ENCODE measurements at regions of chr2 and their contacts with region 1.

Region 1: GRCh38 chr2:137947728-137948336 is 16.4 kb upstream of the HNMT start:
- DNase-seq: peak; percentile 66 to 78 (median 78)
- H3K4me3 ChIP-seq: no peak overlapping the region
- H3K4me3 Mint-ChIP-seq: no peak overlapping the region
- H3K27ac ChIP-seq: no peak overlapping the region
- H3K27ac Mint-ChIP-seq: peak overlapping the region in 1 of 7 donors; percentile 52
- H3K4me1 ChIP-seq: peaks cover 8 to 11% of the 10 kb centered on the region in 2 donors
- H3K4me1 Mint-ChIP-seq: peaks cover 19% of the 10 kb centered on the region
- H3K27me3 ChIP-seq: no peaks in the 10 kb centered on the region
- H3K27me3 Mint-ChIP-seq: peaks cover 0 to 3% (median 3%) of the 10 kb centered on the region in 3 donors
- CTCF ChIP-seq: peak; percentile 76

Region 2: GRCh38 chr2:137857566-137858280 is 90.1 kb before region 1 on chr2:
- intact Hi-C with region 1: no loop called
- DNase-seq: no peak
- H3K4me3 ChIP-seq: no peak overlapping the region
- H3K4me3 Mint-ChIP-seq: no peak overlapping the region
- H3K27ac ChIP-seq: no peak overlapping the region
- H3K27ac Mint-ChIP-seq: no peak overlapping the region
- H3K4me1 ChIP-seq: no peaks in the 10 kb centered on the region
- H3K4me1 Mint-ChIP-seq: no peaks in the 10 kb centered on the region
- H3K27me3 ChIP-seq: no peaks in the 10 kb centered on the region
- H3K27me3 Mint-ChIP-seq: peaks cover 1 to 5% (median 2%) of the 10 kb centered on the region in 3 donors
- CTCF ChIP-seq: no peak

Region 3: GRCh38 chr2:137912371-137912770 is 35.5 kb before region 1 on chr2:
- intact Hi-C with region 1: no loop called
- DNase-seq: no peak
- H3K4me3 ChIP-seq: no peak overlapping the region
- H3K4me3 Mint-ChIP-seq: no peak overlapping the region
- H3K27ac ChIP-seq: no peak overlapping the region
- H3K27ac Mint-ChIP-seq: no peak overlapping the region
- H3K4me1 ChIP-seq: no peaks in the 10 kb centered on the region
- H3K4me1 Mint-ChIP-seq: no peaks in the 10 kb centered on the region
- H3K27me3 ChIP-seq: no peaks in the 10 kb centered on the region
- H3K27me3 Mint-ChIP-seq: no peaks in the 10 kb centered on the region
- CTCF ChIP-seq: no peak

Region 4: GRCh38 chr2:138030459-138030858 is 82.6 kb after region 1 on chr2:
- intact Hi-C with region 1: loop called in 1 of 2 experiments (anchors 10 kb)
- DNase-seq: no peak
- H3K4me3 ChIP-seq: no peak overlapping the region
- H3K4me3 Mint-ChIP-seq: no peak overlapping the region
- H3K27ac ChIP-seq: no peak overlapping the region
- H3K27ac Mint-ChIP-seq: no peak overlapping the region
- H3K4me1 ChIP-seq: peaks cover 40 to 43% of the 10 kb centered on the region in 2 donors
- H3K4me1 Mint-ChIP-seq: peaks cover 5% of the 10 kb centered on the region
- H3K27me3 ChIP-seq: no peaks in the 10 kb centered on the region
- H3K27me3 Mint-ChIP-seq: no peaks in the 10 kb centered on the region
- CTCF ChIP-seq: no peak

Region 5: DNA sequence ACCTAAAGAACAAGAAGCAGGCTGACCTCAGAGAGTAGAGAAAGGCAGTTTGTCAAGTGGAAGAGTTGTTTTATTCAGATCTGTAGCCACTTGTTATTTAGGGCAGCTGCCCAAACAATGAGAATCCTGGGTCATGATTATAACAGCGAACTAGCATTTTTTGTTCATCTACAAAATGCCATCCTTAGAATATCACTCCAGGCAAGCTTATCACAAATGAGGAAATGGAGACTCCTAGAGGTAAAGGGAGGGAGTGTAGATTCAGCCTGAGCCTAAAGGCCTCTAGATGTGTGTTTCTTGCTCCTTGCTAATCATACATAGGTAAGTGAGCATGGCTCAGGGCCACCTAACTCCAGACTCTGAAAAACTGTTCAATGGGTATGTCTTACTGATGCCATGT is 142.5 kb after region 1 on chr2:
- intact Hi-C with region 1: loop called (anchors 10 kb)
- DNase-seq: peak; percentile 27 to 54 (median 49)
- H3K4me3 ChIP-seq: no peak overlapping the region
- H3K4me3 Mint-ChIP-seq: no peak overlapping the region
- H3K27ac ChIP-seq: no peak overlapping the region
- H3K27ac Mint-ChIP-seq: no peak overlapping the region
- H3K4me1 ChIP-seq: peaks cover 10 to 13% of the 10 kb centered on the region in 2 donors
- H3K4me1 Mint-ChIP-seq: peaks cover 11% of the 10 kb centered on the region
- H3K27me3 ChIP-seq: peaks cover 0 to 2% of the 10 kb centered on the region in 2 donors
- H3K27me3 Mint-ChIP-seq: peaks cover 0 to 1% (median 0%) of the 10 kb centered on the region in 3 donors
- CTCF ChIP-seq: peak; percentile 84

Measured in CD14-positive monocyte (primary cell).